Heart right ventricle (tissue), 16 donors: ENCODE measurements at regions of chr1 and their contacts with region 1.

Region 1: GRCh38 chr1:223175032-223175431 is 32.0 kb upstream of the TLR5 start:
- DNase-seq: peak in 1 of 2 donors; percentile 29
- ATAC-seq: peak in 7 of 8 donors; percentile 49 to 77 (median 60)
- H3K4me3 ChIP-seq: no peak overlapping the region
- H3K27ac ChIP-seq: peak overlapping the region in 3 of 10 donors; percentile 8 to 81 (median 9)
- H3K4me1 ChIP-seq: peaks cover 0 to 51% (median 0%) of the 10 kb centered on the region in 9 donors
- H3K27me3 ChIP-seq: no peaks in the 10 kb centered on the region
- CTCF ChIP-seq: peak in 8 of 9 donors; percentile 9 to 57 (median 46)

Region 2: DNA sequence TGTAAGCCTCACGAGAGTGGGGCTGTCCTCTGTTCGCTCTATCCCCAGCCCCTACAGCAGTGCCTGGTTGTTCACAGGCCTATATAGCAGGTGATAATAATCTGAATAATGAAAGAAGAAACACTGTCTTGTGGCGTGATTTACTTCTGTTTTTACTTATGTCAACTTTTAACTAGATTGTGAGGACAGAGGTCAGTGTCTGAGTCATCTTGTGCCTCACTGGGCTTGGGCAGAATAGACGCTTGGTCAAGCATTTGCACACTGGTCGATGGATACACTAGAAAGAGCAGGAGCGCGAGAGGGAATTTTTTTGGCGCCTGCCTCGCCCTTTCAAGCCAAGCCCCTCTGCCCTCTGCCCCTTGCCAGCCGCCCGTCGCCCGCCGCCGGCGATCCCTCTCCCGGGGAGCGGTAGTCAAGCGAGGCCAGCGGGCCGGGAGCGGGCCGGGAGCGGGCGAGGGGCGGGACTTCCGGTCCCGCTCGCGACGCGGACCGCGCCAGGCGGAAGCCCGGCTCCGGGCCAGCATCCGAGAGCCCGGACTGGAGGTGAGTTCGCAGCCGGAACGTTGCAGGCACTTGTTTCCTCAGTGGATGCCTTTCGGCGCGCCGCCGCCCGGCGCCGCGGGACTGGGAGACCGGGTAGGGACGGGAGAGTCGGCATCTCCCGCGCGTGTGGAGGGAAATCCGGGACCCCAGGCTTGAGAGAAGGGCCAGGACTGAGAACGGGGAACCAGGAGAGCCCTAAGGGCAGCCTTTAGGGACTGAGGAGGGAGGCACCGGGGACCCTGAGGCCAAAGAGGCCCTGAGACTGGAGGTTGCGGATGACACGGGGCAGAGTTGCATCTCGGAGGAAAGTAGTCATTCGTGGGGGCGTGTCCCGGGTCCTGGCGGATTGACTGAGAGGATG is 360.2 kb before region 1 on chr1 and contains the start of gene DISP1:
- intact Hi-C with region 1: no loop called
- DNase-seq: peak; percentile 81 to 88
- ATAC-seq: peak; percentile 95 to 99 (median 98)
- H3K4me3 ChIP-seq: peak within 1 kb of the TSS; percentile 64 to 95 (median 86)
- H3K27ac ChIP-seq: peak within 1 kb of the TSS; percentile 32 to 94 (median 90)
- H3K4me1 ChIP-seq: peaks cover 3 to 44% (median 21%) of the 10 kb centered on the region in 9 donors
- H3K27me3 ChIP-seq: no peaks in the 10 kb centered on the region
- CTCF ChIP-seq: peak in 1 of 9 donors; percentile 10
- total RNA-seq, gene DISP1: 3.3 to 7.5 (median 5.7) TPM

Region 3: GRCh38 chr1:222974496-222974895 is 200.5 kb before region 1 on chr1:
- intact Hi-C with region 1: no loop called
- DNase-seq: no peak
- ATAC-seq: no peak
- H3K4me3 ChIP-seq: no peak overlapping the region
- H3K27ac ChIP-seq: no peak overlapping the region
- H3K4me1 ChIP-seq: peaks cover 0 to 16% (median 13%) of the 10 kb centered on the region in 9 donors
- H3K27me3 ChIP-seq: no peaks in the 10 kb centered on the region
- CTCF ChIP-seq: no peak

Region 4: GRCh38 chr1:223189903-223190724 is 15.1 kb after region 1 on chr1:
- intact Hi-C with region 1: no loop called
- DNase-seq: no peak
- ATAC-seq: no peak
- H3K4me3 ChIP-seq: no peak overlapping the region
- H3K27ac ChIP-seq: no peak overlapping the region
- H3K4me1 ChIP-seq: peaks cover 0 to 4% (median 0%) of the 10 kb centered on the region in 9 donors
- H3K27me3 ChIP-seq: no peaks in the 10 kb centered on the region
- CTCF ChIP-seq: no peak

Region 5: DNA sequence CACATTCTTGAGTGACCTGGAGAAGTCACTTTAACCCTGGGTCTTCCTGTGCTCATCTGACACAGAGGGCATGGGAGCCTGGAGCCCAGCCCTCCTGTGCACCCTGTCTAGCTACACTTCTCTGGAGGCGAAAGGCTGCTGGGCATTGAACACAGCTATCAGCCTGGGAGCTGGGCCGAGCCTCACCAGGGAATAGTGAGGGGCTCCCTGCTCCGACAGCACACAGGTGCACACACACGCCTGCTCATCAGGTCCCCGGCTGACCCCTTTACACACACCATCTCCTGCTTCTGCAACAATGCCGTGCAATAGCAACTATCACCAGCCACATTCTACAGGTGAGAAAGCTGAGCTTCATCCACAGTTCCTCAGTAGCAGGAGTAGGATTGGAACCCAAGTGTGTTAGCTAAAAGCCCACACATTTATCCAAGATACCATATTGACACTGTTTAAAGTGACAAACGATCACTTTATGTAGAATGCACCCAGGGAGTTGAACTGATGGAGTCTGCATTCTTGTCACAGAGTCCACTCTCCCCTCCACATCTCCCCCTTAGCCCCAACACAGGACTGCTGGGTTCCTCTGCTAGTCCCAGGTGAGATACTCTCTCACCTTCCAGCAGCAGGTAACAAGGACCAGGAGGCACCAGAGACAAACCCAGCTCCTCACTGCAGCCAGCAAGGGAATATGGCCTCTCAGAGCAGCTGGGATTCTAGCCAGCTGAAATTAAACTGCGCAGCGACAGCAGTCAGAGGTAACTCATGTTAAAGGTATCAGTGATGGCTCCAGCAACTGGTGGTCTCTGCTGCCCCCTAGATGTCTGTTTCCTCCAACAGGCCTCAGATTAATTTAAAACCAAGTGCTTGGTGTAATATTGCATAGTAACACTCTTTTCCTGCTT is 508.8 kb after region 1 on chr1:
- intact Hi-C with region 1: loop called in 1 of 10 experiments (anchors 5 kb)
- DNase-seq: peak in 1 of 2 donors; percentile 43
- ATAC-seq: peak in 5 of 8 donors; percentile 37 to 60 (median 49)
- H3K4me3 ChIP-seq: no peak overlapping the region
- H3K27ac ChIP-seq: no peak overlapping the region
- H3K4me1 ChIP-seq: no peaks in the 10 kb centered on the region
- H3K27me3 ChIP-seq: peaks cover 0 to 20% (median 8%) of the 10 kb centered on the region in 7 donors
- CTCF ChIP-seq: peak; percentile 33 to 69 (median 65)

Region 6: DNA sequence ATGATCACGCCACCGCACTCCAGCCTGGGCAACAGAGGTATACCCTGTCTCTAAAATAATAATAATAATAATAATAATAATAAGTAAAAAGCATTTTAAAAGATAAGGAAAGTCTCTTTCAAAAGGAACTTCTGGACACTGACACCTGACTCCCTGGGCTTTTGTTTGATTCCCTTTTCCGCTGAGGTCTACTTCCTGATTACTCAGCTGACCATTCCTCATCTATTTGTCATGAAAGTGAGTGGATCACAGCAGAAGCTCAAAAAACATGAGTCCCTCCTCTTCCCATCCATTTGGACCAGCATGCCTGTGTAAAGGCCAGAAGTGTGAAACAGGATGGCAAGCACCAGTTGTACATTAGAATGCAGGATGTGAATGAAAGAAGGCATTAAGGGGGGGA is 877.7 kb after region 1 on chr1:
- intact Hi-C with region 1: no loop called
- DNase-seq: no peak
- ATAC-seq: no peak
- H3K4me3 ChIP-seq: no peak overlapping the region
- H3K27ac ChIP-seq: no peak overlapping the region
- H3K4me1 ChIP-seq: peaks cover 0 to 6% (median 0%) of the 10 kb centered on the region in 9 donors
- H3K27me3 ChIP-seq: peaks cover 0 to 6% (median 0%) of the 10 kb centered on the region in 7 donors
- CTCF ChIP-seq: no peak